Activated naive CD8-positive, alpha-beta T cell treated with anti-CD3 and anti-CD28 coated beads, Interleukin-2, amount 10 ng/mL, durations not matched to agents 7 days and 5 days (primary cell): ENCODE measurements at regions of chr5 and their contacts with region 1.

Region 1: GRCh38 chr5:172179361-172179989 is 8.5 kb downstream of the STK10 start:
- DNase-seq: peak; percentile 61
- ATAC-seq: peak; percentile 9
- H3K4me3 Mint-ChIP-seq: peak overlapping the region; percentile 89
- H3K27ac Mint-ChIP-seq: peak overlapping the region; percentile 96
- H3K4me1 Mint-ChIP-seq: peaks cover 69% of the 10 kb centered on the region
- H3K27me3 Mint-ChIP-seq: no peaks in the 10 kb centered on the region

Region 2: DNA sequence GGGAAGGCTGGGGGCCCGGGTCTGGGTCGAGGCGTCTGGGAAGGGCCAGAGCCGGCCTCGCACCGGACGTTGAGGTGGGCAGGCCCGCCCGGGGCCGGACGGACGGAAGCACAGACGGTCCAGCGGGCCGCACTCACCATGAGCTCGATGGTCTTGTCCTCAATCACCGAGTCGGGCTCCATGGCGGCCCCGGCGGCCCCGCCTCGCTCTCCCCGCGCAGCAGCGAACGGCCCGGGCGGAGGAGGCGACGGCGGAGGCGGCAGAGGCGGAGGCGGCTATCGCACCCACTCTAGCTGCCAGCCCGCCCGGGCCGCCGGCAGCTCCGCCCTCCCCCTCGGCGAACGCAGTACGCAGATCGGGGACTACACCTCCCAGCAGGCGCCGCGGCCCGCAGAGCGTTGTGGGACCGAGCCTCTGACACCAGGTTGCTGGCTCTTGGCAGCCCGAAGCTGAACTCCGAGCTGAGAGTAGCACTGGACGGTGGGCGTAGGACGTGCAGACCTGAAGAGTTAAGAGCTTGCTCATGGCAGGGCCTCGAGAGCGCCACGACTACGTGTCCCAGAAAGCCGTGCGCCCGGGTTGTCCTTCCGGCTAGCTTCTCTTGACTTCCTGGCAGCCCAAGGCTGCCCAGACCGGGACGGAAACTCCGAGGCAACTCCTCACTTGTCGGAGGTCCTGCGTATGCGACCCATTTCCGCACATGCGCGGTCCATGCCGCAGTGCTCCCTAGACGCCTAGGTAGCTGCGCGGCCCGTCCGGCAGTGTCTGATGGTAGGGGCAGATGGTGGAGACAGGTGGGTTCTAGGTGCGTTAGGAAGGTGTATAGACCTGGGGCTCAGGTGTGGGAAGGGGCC is 172.9 kb before region 1 on chr5 and contains the start of gene FBXW11:
- POLR2A ChIA-PET with region 1: interaction called, 24 read pairs
- DNase-seq: peak; percentile 93
- ATAC-seq: peak; percentile 90
- H3K4me3 Mint-ChIP-seq: peak within 1 kb of the TSS; percentile 86
- H3K27ac Mint-ChIP-seq: peak within 1 kb of the TSS; percentile 96
- H3K4me1 Mint-ChIP-seq: peaks cover 39% of the 10 kb centered on the region
- H3K27me3 Mint-ChIP-seq: no peaks in the 10 kb centered on the region
- total RNA-seq, gene FBXW11: 35.4 to 37.7 TPM

Region 3: DNA sequence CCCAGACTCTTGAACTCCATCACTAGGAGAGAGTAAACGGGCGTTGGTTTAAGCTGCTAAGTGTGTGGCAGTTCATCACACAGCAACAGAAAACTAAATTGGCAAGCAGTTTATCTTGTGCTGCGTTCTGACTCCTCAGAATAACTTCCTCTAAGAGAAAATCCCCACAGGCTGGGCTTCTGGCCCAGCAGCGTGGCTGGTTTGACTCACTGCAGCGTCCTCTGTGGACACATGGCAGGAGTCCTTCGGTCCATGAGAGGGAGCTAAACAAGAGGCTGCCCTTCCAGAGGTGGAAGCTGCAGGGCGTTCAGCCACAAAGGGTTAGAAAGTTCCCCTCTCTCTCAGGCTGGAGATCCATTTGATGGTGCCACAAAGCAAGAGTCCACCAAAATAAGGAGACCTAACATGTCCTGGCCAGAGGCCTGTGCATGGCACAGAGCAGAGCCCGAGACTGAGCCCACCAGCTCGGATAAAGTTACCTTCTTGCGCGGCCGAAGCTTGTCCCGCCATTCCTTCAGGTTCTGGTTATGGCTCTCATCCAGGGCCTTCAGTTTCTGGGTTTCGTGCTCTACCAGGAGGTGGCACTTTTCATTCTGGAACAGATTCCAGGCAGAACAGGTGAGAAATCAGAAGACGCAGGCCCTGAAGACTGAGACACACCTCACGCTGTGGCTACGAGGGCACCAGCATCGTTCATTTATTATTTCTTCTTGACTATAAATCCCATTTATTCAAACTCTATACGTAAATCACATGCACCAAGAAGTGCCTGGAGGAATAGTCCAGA is 126.8 kb before region 1 on chr5:
- POLR2A ChIA-PET with region 1: no interaction called
- DNase-seq: no peak
- ATAC-seq: no peak
- H3K4me3 Mint-ChIP-seq: no peak overlapping the region
- H3K27ac Mint-ChIP-seq: no peak overlapping the region
- H3K4me1 Mint-ChIP-seq: peaks cover 11% of the 10 kb centered on the region
- H3K27me3 Mint-ChIP-seq: no peaks in the 10 kb centered on the region

Region 4: DNA sequence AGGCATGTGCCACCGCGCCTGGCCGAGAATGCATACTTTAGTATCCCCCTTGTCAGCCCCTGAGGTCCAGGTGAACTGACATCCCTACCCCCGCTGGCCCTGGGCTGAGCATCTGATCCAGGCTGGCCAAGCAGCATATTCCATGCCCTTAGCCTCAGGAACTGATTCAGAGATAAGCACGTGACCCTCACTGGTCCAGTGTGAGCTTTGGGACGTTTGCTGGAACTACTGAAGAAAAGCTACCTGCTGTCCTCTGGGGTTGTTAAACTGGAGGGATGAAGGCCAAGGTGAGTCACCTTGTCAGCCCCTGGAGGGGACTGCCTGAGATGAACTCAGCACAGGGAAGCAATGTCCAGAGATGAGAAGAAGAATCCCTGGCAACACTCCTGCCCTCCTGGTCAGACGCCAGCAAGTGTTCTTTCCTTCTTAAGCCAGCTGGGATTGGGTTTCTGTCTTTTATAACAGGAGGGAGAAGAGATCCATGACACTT is 113.9 kb before region 1 on chr5:
- POLR2A ChIA-PET with region 1: interaction called, 11 read pairs
- DNase-seq: no peak
- ATAC-seq: no peak
- H3K4me3 Mint-ChIP-seq: no peak overlapping the region
- H3K27ac Mint-ChIP-seq: peak overlapping the region; percentile 74
- H3K4me1 Mint-ChIP-seq: peaks cover 47% of the 10 kb centered on the region
- H3K27me3 Mint-ChIP-seq: no peaks in the 10 kb centered on the region

Region 5: DNA sequence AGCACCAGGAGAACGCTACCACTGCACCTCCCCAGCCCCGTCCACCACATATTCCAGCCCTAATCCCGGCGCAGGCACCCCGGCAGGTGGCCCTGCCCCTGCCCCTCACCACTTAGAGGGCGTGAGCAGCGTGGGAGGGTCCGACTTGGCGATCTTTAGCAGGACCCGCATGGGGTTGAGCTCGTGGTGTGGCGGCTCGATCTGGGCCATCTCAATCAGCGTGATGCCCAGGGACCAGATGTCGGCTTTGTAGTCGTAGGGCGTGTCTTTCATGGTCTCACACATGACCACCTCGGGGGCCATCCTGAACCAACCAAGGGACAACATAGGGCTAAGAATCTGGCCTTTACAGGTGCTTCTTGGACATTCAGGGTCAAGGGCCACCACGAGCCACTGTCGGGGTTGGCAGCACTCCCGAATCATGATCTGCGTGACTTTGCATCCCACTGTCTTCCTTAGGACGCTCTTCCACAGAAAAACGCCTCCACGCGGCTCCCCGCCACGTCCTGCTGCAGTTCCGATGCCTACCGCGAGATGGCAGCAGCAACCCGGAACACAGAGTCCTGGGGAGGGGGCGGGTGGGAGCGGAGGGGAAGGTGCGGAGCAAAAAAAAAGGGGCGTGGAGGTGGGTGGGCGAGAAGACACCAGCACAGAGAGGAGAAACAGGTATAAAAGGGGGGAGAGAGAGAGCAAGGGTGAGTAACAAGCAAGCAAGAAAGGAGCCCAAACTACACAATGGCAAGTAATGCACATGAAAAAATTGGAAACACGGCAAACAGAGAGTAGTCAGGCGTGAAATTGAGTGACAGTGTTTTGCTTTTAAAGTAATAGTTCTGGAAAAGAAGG is 72.7 kb before region 1 on chr5:
- POLR2A ChIA-PET with region 1: interaction called, 217 read pairs
- DNase-seq: peak; percentile 76
- ATAC-seq: no peak
- H3K4me3 Mint-ChIP-seq: peak overlapping the region; percentile 50
- H3K27ac Mint-ChIP-seq: peak overlapping the region; percentile 80
- H3K4me1 Mint-ChIP-seq: peaks cover 50% of the 10 kb centered on the region
- H3K27me3 Mint-ChIP-seq: no peaks in the 10 kb centered on the region

Region 6: DNA sequence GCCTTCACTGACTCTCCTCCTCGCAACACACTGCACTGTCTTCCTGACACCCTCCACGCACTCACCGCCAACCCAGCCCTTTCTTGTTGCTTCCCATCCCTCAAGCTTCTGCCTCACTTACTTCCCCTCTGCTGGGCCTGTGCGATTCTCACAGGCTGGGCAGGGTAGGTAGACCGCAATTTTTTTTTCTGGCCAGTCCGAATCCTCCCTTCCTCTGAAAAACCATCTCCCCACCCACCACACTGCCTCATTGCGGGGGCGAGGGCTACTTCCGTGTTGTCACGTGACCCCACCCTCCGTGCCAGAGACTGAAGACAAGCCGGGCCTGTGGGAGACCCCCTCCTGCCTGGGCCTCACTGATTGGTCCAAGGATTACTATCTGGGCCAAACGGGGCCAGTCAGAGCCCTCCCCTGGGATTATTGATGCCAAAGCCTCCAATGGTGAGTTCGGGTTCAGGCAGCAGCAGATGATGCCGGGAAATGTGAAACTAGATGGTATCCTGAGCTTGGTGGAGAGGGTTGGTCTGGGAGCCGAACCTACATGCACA is 64.5 kb before region 1 on chr5:
- POLR2A ChIA-PET with region 1: interaction called, 217 read pairs
- DNase-seq: peak; percentile 85
- ATAC-seq: peak; percentile 79
- H3K4me3 Mint-ChIP-seq: peak overlapping the region; percentile 79
- H3K27ac Mint-ChIP-seq: peak overlapping the region; percentile 96
- H3K4me1 Mint-ChIP-seq: peaks cover 68% of the 10 kb centered on the region
- H3K27me3 Mint-ChIP-seq: no peaks in the 10 kb centered on the region

Region 7: DNA sequence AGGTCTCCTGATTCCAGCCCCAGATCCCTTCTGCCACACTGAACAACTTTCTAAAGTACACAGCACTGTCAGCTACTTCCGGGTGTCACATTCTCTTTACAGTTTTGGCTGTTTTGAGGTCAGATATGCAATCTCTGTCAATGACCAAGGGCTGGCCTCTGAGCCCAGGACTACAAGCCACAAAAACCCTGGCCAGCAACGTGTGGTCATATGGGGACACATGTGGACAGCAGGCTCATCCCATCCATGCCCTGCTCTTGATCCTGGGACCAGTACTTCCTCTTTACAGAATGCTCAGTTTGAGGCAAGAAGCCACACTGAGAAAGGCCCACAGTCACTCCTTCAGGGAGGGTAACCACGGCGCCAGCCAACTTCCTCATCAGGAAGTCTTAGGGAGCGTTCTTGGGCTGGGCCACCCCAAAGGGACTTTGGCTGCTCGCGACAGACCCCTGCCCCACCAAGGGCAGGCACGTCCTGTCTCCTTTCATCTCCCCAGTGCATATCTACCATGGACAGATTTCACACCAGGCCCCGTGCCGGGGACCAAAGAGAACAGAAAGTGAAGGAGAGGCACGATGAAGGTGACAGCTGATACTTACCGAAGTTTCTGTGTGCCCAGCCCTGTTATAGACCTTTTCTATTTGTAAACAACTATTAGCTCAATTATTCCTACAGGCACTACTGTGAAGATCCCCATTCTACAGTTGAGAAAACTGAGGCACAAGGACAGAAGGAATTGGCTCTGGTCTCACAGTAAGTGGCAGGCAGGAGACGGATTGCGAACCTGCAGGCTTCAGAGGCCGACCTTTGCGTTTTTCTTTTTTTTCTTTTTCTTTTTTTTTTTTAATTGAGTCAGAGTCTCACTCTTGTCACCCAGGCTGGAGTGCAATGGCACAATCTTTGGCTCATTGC is 28.7 kb before region 1 on chr5:
- POLR2A ChIA-PET with region 1: interaction called, 10 read pairs
- DNase-seq: peak; percentile 54
- ATAC-seq: peak; percentile 79
- H3K4me3 Mint-ChIP-seq: peak overlapping the region; percentile 73
- H3K27ac Mint-ChIP-seq: peak overlapping the region; percentile 71
- H3K4me1 Mint-ChIP-seq: peaks cover 41% of the 10 kb centered on the region
- H3K27me3 Mint-ChIP-seq: no peaks in the 10 kb centered on the region

Region 8: DNA sequence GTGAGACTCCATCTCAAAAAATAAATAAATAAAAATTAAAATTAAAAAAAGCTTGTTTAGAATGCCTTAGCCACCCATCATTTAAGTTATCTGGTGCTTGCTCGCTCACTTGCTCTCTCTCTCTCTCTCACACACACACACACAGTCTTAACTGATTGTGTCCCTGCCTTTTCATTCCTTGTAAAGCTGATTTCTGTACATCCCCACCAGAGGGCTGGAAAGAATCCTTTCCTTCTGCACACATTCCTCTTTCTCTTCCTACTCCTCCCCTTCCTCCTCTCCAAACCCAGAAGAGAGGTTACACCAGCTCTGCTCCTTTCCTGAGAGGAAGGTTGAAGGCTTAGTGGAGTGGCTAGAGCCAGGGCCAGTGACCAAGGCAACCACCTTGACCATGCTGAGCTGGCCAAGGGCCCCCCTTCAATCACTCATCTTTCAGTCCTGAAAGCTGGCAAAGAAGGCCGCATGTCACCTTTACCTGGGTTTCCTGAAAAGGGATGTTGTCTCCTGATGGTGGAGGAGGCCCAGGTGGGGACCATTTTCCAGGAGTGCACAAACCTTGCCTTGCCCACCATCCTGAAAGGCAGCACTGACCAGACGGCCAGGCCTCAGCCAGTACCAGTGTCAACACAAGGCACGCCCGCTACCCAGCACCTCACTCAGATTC is 17.0 kb before region 1 on chr5:
- POLR2A ChIA-PET with region 1: interaction called, 15 read pairs
- DNase-seq: no peak
- ATAC-seq: no peak
- H3K4me3 Mint-ChIP-seq: no peak overlapping the region
- H3K27ac Mint-ChIP-seq: no peak overlapping the region
- H3K4me1 Mint-ChIP-seq: peaks cover 33% of the 10 kb centered on the region
- H3K27me3 Mint-ChIP-seq: no peaks in the 10 kb centered on the region

Region 9: DNA sequence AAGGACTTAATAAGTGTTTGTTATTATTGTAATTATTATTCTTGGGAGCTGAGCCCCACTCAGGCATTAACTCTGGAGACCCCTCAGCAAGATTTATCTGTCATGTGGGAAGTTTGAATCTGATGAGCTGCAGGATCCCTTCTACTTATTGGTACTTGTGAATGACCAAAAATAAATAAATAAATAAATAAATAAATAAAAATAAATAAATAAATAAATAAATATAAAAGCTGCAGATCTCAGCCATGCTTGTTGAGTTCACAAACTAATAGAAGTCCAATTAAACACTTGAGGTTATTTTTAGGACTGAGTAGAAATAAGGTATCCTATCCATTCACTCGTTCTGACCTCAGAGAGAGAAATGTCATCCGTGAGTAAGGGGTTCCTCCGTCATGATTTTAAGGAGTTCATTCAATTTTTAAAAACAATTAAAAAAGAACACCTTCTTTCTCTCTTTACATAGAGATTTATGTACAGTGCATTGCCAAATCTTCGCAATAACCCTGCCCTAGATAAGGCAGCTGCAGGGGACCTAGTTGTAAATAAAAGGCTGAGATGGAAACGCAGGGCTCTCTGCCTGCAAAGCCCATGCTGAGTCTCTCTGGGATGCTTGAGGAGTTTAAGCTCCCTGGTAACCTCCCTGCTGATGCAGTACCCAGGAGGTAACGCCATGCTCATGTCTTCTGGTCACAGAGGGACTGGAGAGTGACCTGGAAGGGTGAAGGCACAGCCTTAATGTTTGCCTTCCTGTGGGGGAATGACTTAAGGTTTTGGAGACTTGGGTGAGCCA is 15.7 kb after region 1 on chr5:
- POLR2A ChIA-PET with region 1: no interaction called
- DNase-seq: no peak
- ATAC-seq: no peak
- H3K4me3 Mint-ChIP-seq: no peak overlapping the region
- H3K27ac Mint-ChIP-seq: no peak overlapping the region
- H3K4me1 Mint-ChIP-seq: peaks cover 2% of the 10 kb centered on the region
- H3K27me3 Mint-ChIP-seq: peaks cover 14% of the 10 kb centered on the region

Region 10: DNA sequence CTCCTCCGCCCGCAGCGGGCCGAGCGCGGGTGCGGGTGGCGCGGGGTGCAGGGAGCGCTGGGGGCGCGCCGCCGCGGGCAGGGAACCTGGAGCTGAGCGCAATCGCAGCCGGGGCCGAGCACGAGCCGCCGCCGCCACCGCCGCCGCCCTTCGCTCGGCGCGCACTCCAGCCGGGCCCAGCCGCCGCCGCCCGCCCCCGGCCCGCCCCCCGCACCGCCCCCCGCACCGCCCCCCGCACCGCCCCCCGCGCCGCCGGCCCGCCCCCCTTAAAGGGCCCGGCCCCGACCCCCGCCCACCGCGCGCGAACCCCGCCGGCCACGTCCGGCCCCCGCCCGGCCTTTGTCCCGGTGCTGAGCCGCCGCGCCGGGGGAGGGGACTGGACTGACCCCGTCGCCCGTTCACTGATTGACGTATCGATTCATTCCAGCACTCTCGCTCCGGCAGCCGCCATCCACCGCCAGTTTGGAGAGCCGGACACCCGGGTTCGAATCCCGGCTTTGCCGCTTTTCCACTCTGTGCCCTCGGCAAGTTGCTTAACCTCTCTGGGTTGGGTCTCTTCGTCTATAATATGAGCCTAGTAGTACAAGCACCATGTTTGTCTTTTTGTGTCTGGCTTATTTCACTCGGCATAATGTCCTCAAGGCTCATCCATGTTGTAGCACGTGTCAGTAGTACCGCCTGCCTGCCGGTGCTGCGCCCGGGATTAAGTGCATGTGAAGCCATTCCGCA is 275.0 kb after region 1 on chr5 and contains the start of gene SH3PXD2B:
- POLR2A ChIA-PET with region 1: no interaction called
- DNase-seq: peak; percentile 67
- ATAC-seq: peak; percentile 79
- H3K4me3 Mint-ChIP-seq: peak within 1 kb of the TSS; percentile 80
- H3K27ac Mint-ChIP-seq: no peak within 1 kb of the TSS
- H3K4me1 Mint-ChIP-seq: peaks cover 10% of the 10 kb centered on the region
- H3K27me3 Mint-ChIP-seq: peaks cover 42% of the 10 kb centered on the region
- total RNA-seq, gene SH3PXD2B: 0.28 to 0.42 TPM

Region 11: DNA sequence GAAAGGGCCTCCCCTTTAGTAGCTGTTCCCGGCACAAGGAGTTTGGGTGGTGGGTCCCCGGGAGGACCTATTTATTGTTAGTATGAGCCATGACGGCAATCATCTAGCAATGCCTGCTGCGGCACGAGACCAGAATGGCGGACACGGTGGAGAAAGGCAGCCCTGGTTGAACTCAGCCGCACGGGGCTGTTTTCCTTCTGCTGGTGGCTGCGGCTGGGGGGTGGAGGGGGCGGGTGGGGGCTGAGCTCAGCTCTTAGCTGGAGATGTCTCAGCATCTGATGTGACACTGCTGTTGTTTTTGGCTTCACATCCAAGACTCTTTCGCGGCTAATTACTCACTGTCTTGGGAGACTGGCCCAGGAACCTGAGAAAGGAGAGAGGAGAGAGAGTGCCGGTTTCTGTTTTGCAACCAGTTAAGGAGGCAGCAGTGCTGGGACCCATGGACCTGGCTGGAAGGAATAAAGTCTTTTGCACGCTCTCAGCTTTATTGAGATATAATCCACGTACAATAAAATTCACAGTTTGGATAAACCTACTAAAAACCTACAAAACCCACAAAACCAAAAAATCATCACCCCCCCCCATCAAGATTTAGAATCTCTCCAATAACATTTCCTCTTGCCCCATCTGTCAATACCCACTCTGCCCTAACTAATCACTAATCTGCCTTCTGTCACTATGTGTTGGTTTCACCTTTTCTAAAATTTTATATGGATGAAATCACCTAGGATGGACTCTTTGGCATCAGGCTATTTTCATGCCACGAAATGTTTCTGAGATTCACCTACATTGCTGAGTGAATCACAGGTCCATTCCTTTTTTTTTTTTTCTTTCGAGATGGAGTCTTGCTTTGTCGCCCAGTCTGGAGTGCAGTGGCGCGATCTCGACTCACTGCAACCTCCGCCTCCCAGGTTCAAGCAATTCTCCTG is 379.8 kb after region 1 on chr5:
- POLR2A ChIA-PET with region 1: no interaction called
- DNase-seq: no peak
- ATAC-seq: no peak
- H3K4me3 Mint-ChIP-seq: no peak overlapping the region
- H3K27ac Mint-ChIP-seq: no peak overlapping the region
- H3K4me1 Mint-ChIP-seq: no peaks in the 10 kb centered on the region
- H3K27me3 Mint-ChIP-seq: peaks cover 1% of the 10 kb centered on the region